B cell (primary cell): ENCODE measurements at regions of chr21 and their contacts with region 1.

Region 1: DNA sequence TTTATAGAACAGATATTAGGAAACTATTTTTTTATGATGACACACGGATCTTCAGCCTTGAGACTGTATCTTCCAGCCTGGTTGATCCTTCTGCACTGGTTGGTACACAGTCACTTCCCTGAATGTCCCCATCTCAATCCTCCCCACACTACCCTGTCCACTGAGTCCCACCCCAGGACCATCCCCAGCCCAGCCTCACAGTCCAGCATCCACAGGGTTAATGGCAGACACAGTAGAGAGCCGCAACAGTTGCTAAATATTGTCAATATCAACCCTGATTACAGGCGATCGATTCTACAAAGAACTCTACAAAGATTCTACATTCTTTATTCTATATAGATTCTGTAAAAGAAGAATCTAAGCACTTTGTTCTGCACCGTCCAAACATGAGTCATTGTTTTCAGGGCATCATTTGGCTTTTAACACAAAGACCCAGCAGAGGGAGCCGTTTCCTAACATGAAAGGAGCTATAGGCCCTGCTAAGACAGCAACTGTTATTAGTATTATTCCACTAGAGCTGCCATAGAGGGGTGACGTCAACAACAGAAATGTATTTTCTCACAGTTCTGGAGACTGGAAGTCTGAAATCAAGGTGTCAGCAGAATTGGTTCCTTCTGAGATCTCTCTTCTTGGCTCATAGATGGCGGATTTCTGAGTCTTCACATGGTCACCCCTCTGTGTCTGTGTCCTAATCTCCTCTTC is 30.1 kb upstream of the IFNAR2 start:
- DNase-seq: peak; percentile 90
- ATAC-seq: peak; percentile 94
- H3K4me3 ChIP-seq: no peak overlapping the region
- H3K4me3 Mint-ChIP-seq: no peak overlapping the region
- H3K27ac ChIP-seq: peak overlapping the region in 1 of 2 donors; percentile 39
- H3K27ac Mint-ChIP-seq: peak overlapping the region; percentile 51
- H3K4me1 ChIP-seq: peaks cover 20 to 25% of the 10 kb centered on the region in 2 donors
- H3K4me1 Mint-ChIP-seq: peaks cover 30% of the 10 kb centered on the region
- H3K27me3 ChIP-seq: no peaks in the 10 kb centered on the region
- H3K27me3 Mint-ChIP-seq: peaks cover 15% of the 10 kb centered on the region
- CTCF ChIP-seq: peak; percentile 86

Region 2: GRCh38 chr21:32834916-32835235 is 364.8 kb before region 1 on chr21:
- CTCF ChIA-PET with region 1: interaction called, 27 read pairs
- POLR2A ChIA-PET with region 1: no interaction called
- intact Hi-C with region 1: no loop called
- DNase-seq: no peak
- ATAC-seq: no peak
- H3K4me3 ChIP-seq: no peak overlapping the region
- H3K4me3 Mint-ChIP-seq: no peak overlapping the region
- H3K27ac ChIP-seq: no peak overlapping the region
- H3K27ac Mint-ChIP-seq: no peak overlapping the region
- H3K4me1 ChIP-seq: no peaks in the 10 kb centered on the region
- H3K4me1 Mint-ChIP-seq: no peaks in the 10 kb centered on the region
- H3K27me3 ChIP-seq: peaks cover 0 to 11% (median 4%) of the 10 kb centered on the region in 4 experiments
- H3K27me3 Mint-ChIP-seq: peaks cover 30% of the 10 kb centered on the region
- CTCF ChIP-seq: no peak

Region 3: DNA sequence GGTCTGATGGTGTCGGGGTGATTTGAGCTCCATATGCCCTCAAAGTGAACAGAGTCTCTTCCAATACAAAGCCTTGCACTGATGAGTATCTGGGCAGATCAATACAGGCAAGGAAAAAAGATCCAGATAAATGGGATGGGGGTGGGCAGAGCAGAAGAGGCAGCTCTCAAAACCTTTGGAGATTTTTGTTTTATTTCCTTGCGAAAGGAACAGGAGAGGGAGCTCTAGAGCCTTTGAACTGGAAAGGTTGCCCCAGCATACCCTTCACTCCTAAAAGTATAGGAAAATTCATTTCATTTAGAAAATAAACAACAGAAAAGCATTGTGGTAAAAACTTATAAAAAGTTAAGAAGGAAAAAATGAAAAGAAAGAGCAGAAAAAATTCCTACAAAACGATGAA is 205.4 kb before region 1 on chr21:
- CTCF ChIA-PET with region 1: interaction called, 5 read pairs
- POLR2A ChIA-PET with region 1: no interaction called
- intact Hi-C with region 1: loop called (anchors 1 kb)
- DNase-seq: no peak
- ATAC-seq: no peak
- H3K4me3 ChIP-seq: no peak overlapping the region
- H3K4me3 Mint-ChIP-seq: no peak overlapping the region
- H3K27ac ChIP-seq: no peak overlapping the region
- H3K27ac Mint-ChIP-seq: no peak overlapping the region
- H3K4me1 ChIP-seq: no peaks in the 10 kb centered on the region
- H3K4me1 Mint-ChIP-seq: no peaks in the 10 kb centered on the region
- H3K27me3 ChIP-seq: peaks cover 0 to 12% (median 4%) of the 10 kb centered on the region in 4 experiments
- H3K27me3 Mint-ChIP-seq: peaks cover 45% of the 10 kb centered on the region
- CTCF ChIP-seq: no peak

Region 4: GRCh38 chr21:33238565-33239255 is 39.0 kb after region 1 on chr21:
- CTCF ChIA-PET with region 1: interaction called, 16 read pairs
- POLR2A ChIA-PET with region 1: interaction called, 3 read pairs
- intact Hi-C with region 1: no loop called
- DNase-seq: peak; percentile 31
- ATAC-seq: peak; percentile 53
- H3K4me3 ChIP-seq: peak overlapping the region in 1 of 5 experiments; percentile 35
- H3K4me3 Mint-ChIP-seq: peak overlapping the region; percentile 69
- H3K27ac ChIP-seq: peak overlapping the region; percentile 34 to 46
- H3K27ac Mint-ChIP-seq: peak overlapping the region; percentile 71
- H3K4me1 ChIP-seq: peaks cover 18 to 43% of the 10 kb centered on the region in 2 donors
- H3K4me1 Mint-ChIP-seq: peaks cover 53% of the 10 kb centered on the region
- H3K27me3 ChIP-seq: no peaks in the 10 kb centered on the region
- H3K27me3 Mint-ChIP-seq: no peaks in the 10 kb centered on the region
- CTCF ChIP-seq: no peak

Region 5: GRCh38 chr21:33332143-33332542 is 132.5 kb after region 1 on chr21:
- CTCF ChIA-PET with region 1: interaction called, 15 read pairs
- POLR2A ChIA-PET with region 1: no interaction called
- intact Hi-C with region 1: no loop called
- DNase-seq: peak; percentile 60
- ATAC-seq: peak; percentile 77
- H3K4me3 ChIP-seq: peak overlapping the region in 2 of 5 experiments; percentile 19 to 37
- H3K4me3 Mint-ChIP-seq: peak overlapping the region; percentile 59
- H3K27ac ChIP-seq: peak overlapping the region; percentile 57 to 79
- H3K27ac Mint-ChIP-seq: peak overlapping the region; percentile 67
- H3K4me1 ChIP-seq: peaks cover 58 to 71% of the 10 kb centered on the region in 2 donors
- H3K4me1 Mint-ChIP-seq: peaks cover 70% of the 10 kb centered on the region
- H3K27me3 ChIP-seq: no peaks in the 10 kb centered on the region
- H3K27me3 Mint-ChIP-seq: no peaks in the 10 kb centered on the region
- CTCF ChIP-seq: no peak

Region 6: GRCh38 chr21:33451634-33452071 is 252.0 kb after region 1 on chr21:
- CTCF ChIA-PET with region 1: interaction called, 140 read pairs
- POLR2A ChIA-PET with region 1: no interaction called
- intact Hi-C with region 1: no loop called
- DNase-seq: no peak
- ATAC-seq: no peak
- H3K4me3 ChIP-seq: no peak overlapping the region
- H3K4me3 Mint-ChIP-seq: no peak overlapping the region
- H3K27ac ChIP-seq: no peak overlapping the region
- H3K27ac Mint-ChIP-seq: no peak overlapping the region
- H3K4me1 ChIP-seq: no peaks in the 10 kb centered on the region
- H3K4me1 Mint-ChIP-seq: no peaks in the 10 kb centered on the region
- H3K27me3 ChIP-seq: no peaks in the 10 kb centered on the region
- H3K27me3 Mint-ChIP-seq: no peaks in the 10 kb centered on the region
- CTCF ChIP-seq: no peak